Endothelial cell of umbilical vein (primary cell): ENCODE measurements at regions of chr18 and their contacts with region 1.

Region 1: GRCh38 chr18:10519999-10520935 is 5.6 kb upstream of the NAPG start:
- DNase-seq: peak; percentile 86
- H3K4me3 ChIP-seq: no peak overlapping the region
- H3K27ac ChIP-seq: no peak overlapping the region
- H3K4me1 ChIP-seq: no peaks in the 10 kb centered on the region
- H3K27me3 ChIP-seq: peaks cover 32 to 49% of the 10 kb centered on the region in 2 experiments
- CTCF ChIP-seq: peak; percentile 72 to 81
- POLR2A ChIP-seq: no peak

Region 2: GRCh38 chr18:9987931-9988330 is 532.3 kb before region 1 on chr18:
- CTCF ChIA-PET with region 1: interaction called, 4 read pairs
- POLR2A ChIA-PET with region 1: no interaction called
- dilution Hi-C with region 1: loop called (anchors 25 kb)
- intact Hi-C with region 1: no loop called
- DNase-seq: no peak
- H3K4me3 ChIP-seq: no peak overlapping the region
- H3K27ac ChIP-seq: no peak overlapping the region
- H3K4me1 ChIP-seq: no peaks in the 10 kb centered on the region
- H3K27me3 ChIP-seq: peaks cover 13 to 24% of the 10 kb centered on the region in 2 experiments
- CTCF ChIP-seq: no peak
- POLR2A ChIP-seq: no peak

Region 3: DNA sequence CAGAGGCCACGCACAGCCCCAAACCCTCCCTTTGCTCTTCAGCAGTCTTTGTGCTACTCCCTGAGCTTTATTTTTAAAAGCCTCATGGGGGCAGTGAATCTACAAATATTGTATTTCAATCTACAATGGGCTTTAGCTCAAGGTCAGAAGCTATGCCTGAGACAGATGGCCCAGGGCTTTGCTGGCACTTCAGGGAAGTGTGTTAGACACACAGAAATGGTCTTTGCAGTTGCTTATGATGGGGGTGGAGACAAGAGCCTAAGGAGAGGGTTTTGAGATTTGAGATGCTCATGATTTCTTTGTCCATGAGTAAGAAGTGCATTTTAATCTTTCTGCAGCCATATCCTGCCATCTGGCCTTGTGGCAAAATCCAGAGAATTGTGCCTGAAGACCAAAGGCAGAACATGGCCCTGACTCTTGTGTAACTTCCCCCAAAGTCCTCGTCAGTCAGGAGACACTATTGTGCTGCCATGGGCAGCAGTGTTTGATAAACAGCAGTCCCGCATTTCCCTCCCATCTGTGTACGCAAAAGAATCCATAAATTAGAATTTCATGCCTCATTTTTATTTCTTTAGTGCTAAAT is 513.9 kb before region 1 on chr18:
- CTCF ChIA-PET with region 1: interaction called, 34 read pairs
- POLR2A ChIA-PET with region 1: no interaction called
- dilution Hi-C with region 1: no loop called
- intact Hi-C with region 1: loop called (anchors 1 kb)
- DNase-seq: peak; percentile 29
- H3K4me3 ChIP-seq: no peak overlapping the region
- H3K27ac ChIP-seq: no peak overlapping the region
- H3K4me1 ChIP-seq: no peaks in the 10 kb centered on the region
- H3K27me3 ChIP-seq: peaks cover 4 to 9% of the 10 kb centered on the region in 2 experiments
- CTCF ChIP-seq: peak in 1 of 2 donors; percentile 16
- POLR2A ChIP-seq: no peak

Region 4: DNA sequence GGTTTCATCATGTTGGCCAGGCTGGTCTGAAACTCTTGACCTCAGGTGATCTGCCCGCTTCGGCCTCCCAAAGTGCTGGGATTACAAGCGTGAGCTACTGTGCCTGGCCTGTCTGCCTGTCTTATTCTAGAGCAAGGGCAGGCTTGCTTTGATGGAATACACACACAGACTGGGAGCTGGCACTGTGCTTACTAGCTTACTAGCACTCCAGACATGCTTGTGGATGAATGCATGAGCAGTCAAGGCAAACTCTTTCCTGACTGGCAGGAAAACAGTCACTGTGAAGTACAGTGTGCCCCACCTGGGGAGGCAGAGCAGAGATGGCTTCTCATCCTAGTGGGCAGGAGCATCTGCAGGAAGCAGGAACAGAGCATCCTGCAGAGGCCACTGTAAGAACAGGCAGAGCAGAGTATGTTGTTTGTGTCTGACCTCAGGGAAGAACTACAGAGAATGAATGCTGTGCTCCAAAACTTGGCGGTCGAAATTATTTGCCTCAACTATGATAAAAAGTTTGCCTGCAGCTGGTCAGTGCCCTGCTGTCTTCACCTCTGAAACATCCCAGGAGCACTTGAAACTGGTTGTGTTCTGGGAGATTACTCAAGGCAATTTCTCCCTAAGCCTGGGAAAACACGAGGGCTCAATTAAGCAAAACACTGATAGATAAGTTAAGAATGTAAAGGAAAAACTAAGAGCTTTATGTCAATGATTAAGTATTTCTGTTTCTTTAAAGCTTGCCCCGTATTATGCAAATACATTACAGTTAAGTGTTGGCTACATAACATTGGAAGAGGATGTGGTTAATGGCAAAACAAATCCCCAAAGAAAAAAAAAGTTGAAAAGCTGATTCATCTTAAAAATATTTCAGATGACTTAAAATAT is 504.1 kb before region 1 on chr18:
- CTCF ChIA-PET with region 1: interaction called, 12 read pairs
- POLR2A ChIA-PET with region 1: no interaction called
- dilution Hi-C with region 1: no loop called
- intact Hi-C with region 1: no loop called
- DNase-seq: peak; percentile 47
- H3K4me3 ChIP-seq: no peak overlapping the region
- H3K27ac ChIP-seq: peak overlapping the region; percentile 44
- H3K4me1 ChIP-seq: peaks cover 17% of the 10 kb centered on the region
- H3K27me3 ChIP-seq: no peaks in the 10 kb centered on the region
- CTCF ChIP-seq: peak in 1 of 2 donors; percentile 10
- POLR2A ChIP-seq: no peak